Activated T-helper 1 cell treated with anti-CD3 and anti-CD28 coated beads, Interleukin-12 subunit alpha, Interleukin-12 subunit beta, Interleukin-2, Interleukin-4 antibody, amounts not matched to agents 30 ng/mL and 10 ng/mL and 1 ng/mL, durations not matched to agents 14 hours and 24 hours and 36 hours (primary cell): ENCODE measurements at regions of chr3 and their contacts with region 1.

Region 1: GRCh38 chr3:50154840-50155474 is at the start of gene SEMA3F:
- DNase-seq: peak; percentile 69
- H3K4me3 Mint-ChIP-seq: peak within 1 kb of the TSS; percentile 81
- H3K27ac Mint-ChIP-seq: no peak within 1 kb of the TSS
- H3K4me1 Mint-ChIP-seq: no peaks in the 10 kb centered on the region
- H3K27me3 Mint-ChIP-seq: peaks cover 47% of the 10 kb centered on the region
- total RNA-seq, gene SEMA3F: 0.21 and 0.42 TPM in 2 replicates

Region 2: DNA sequence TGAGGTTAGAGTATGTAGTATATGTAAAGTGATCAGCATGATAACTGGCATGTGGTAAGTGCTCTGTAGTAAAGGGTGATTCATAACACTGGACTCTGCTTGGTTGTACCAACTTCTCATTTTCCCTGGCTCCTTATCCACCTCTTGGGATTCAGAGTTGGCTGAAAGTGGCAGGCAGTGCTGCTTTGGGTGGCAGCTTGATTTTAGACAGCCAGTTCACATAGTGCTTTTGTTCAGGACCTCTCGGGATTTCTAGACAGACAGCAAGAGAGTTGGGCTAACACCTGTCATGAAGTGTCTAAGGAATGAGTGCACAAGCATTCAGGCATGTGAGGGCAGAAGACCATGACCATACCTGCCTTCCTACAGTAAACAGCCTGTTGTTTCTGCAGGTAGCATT is 146.0 kb before region 1 on chr3:
- intact Hi-C with region 1: no loop called
- DNase-seq: no peak
- H3K4me3 Mint-ChIP-seq: no peak overlapping the region
- H3K27ac Mint-ChIP-seq: no peak overlapping the region
- H3K4me1 Mint-ChIP-seq: no peaks in the 10 kb centered on the region
- H3K27me3 Mint-ChIP-seq: no peaks in the 10 kb centered on the region

Region 3: GRCh38 chr3:50088725-50089608 is 66.0 kb before region 1 on chr3 and contains the start of gene RBM5:
- intact Hi-C with region 1: loop called (anchors 1 kb)
- DNase-seq: peak; percentile 91
- H3K4me3 Mint-ChIP-seq: peak within 1 kb of the TSS; percentile 97
- H3K27ac Mint-ChIP-seq: peak within 1 kb of the TSS; percentile 95
- H3K4me1 Mint-ChIP-seq: peaks cover 31% of the 10 kb centered on the region
- H3K27me3 Mint-ChIP-seq: no peaks in the 10 kb centered on the region
- total RNA-seq, gene RBM5: 157 and 162 TPM in 2 replicates

Region 4: GRCh38 chr3:50121416-50122032 is 33.4 kb before region 1 on chr3:
- intact Hi-C with region 1: loop called (anchors 2 kb)
- DNase-seq: peak; percentile 36
- H3K4me3 Mint-ChIP-seq: no peak overlapping the region
- H3K27ac Mint-ChIP-seq: no peak overlapping the region
- H3K4me1 Mint-ChIP-seq: no peaks in the 10 kb centered on the region
- H3K27me3 Mint-ChIP-seq: no peaks in the 10 kb centered on the region

Region 5: GRCh38 chr3:50139718-50140423 is 15.1 kb before region 1 on chr3:
- intact Hi-C with region 1: loop called (anchors 2 kb)
- DNase-seq: no peak
- H3K4me3 Mint-ChIP-seq: no peak overlapping the region
- H3K27ac Mint-ChIP-seq: no peak overlapping the region
- H3K4me1 Mint-ChIP-seq: peaks cover 7% of the 10 kb centered on the region
- H3K27me3 Mint-ChIP-seq: no peaks in the 10 kb centered on the region

Region 6: GRCh38 chr3:50235716-50236496 is 80.9 kb after region 1 on chr3 and contains the start of gene GNAI2:
- intact Hi-C with region 1: loop called (anchors 1 kb)
- DNase-seq: peak; percentile 99
- H3K4me3 Mint-ChIP-seq: peak within 1 kb of the TSS; percentile 99
- H3K27ac Mint-ChIP-seq: peak within 1 kb of the TSS; percentile 94
- H3K4me1 Mint-ChIP-seq: peaks cover 32% of the 10 kb centered on the region
- H3K27me3 Mint-ChIP-seq: no peaks in the 10 kb centered on the region
- total RNA-seq, gene GNAI2: 237 and 238 TPM in 2 replicates